B cell (primary cell): ENCODE measurements at regions of chr7 and their contacts with region 1.

Region 1: DNA sequence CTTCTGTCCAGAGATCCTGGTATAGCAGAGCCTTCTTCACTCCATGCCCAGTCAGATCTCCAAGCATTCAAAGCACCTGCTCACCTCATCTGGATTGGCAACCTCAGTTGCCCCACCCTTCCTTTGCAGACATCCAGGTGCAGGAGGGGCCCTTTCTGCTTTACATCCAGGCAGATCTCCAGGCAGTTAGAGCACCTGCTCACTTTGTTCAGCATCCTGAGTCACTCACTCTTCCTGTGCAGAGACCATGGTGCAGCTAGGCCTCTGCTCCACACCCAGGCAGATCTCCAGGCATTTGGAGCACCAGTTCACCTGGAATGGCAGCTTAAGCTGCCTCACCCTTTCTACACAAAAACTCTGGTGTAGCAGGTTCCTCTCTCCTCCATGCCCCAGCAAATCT is 153.1 kb downstream of the CDK14 start:
- DNase-seq: no peak
- ATAC-seq: no peak
- H3K4me3 ChIP-seq: no peak overlapping the region
- H3K4me3 Mint-ChIP-seq: peak overlapping the region; percentile 52
- H3K27ac ChIP-seq: no peak overlapping the region
- H3K27ac Mint-ChIP-seq: peak overlapping the region; percentile 54
- H3K4me1 ChIP-seq: peaks cover 15 to 24% of the 10 kb centered on the region in 2 donors
- H3K4me1 Mint-ChIP-seq: peaks cover 66% of the 10 kb centered on the region
- H3K27me3 ChIP-seq: no peaks in the 10 kb centered on the region
- H3K27me3 Mint-ChIP-seq: no peaks in the 10 kb centered on the region
- CTCF ChIP-seq: no peak

Region 2: GRCh38 chr7:90690159-90690858 is 59.0 kb before region 1 on chr7:
- CTCF ChIA-PET with region 1: interaction called, 11 read pairs
- POLR2A ChIA-PET with region 1: no interaction called
- intact Hi-C with region 1: no loop called
- DNase-seq: no peak
- ATAC-seq: peak; percentile 33
- H3K4me3 ChIP-seq: peak overlapping the region in 1 of 5 experiments; percentile 32
- H3K4me3 Mint-ChIP-seq: no peak overlapping the region
- H3K27ac ChIP-seq: no peak overlapping the region
- H3K27ac Mint-ChIP-seq: no peak overlapping the region
- H3K4me1 ChIP-seq: peaks cover 10 to 17% of the 10 kb centered on the region in 2 donors
- H3K4me1 Mint-ChIP-seq: peaks cover 35% of the 10 kb centered on the region
- H3K27me3 ChIP-seq: no peaks in the 10 kb centered on the region
- H3K27me3 Mint-ChIP-seq: no peaks in the 10 kb centered on the region
- CTCF ChIP-seq: peak; percentile 62